AG04449 (cell line): ENCODE measurements at regions of chr11 and their contacts with region 1.

Region 1: GRCh38 chr11:46529095-46529905 is 64.5 kb downstream of the AMBRA1 start:
- DNase-seq: no peak
- H3K4me3 ChIP-seq: no peak overlapping the region
- CTCF ChIP-seq: peak; percentile 84

Region 2: DNA sequence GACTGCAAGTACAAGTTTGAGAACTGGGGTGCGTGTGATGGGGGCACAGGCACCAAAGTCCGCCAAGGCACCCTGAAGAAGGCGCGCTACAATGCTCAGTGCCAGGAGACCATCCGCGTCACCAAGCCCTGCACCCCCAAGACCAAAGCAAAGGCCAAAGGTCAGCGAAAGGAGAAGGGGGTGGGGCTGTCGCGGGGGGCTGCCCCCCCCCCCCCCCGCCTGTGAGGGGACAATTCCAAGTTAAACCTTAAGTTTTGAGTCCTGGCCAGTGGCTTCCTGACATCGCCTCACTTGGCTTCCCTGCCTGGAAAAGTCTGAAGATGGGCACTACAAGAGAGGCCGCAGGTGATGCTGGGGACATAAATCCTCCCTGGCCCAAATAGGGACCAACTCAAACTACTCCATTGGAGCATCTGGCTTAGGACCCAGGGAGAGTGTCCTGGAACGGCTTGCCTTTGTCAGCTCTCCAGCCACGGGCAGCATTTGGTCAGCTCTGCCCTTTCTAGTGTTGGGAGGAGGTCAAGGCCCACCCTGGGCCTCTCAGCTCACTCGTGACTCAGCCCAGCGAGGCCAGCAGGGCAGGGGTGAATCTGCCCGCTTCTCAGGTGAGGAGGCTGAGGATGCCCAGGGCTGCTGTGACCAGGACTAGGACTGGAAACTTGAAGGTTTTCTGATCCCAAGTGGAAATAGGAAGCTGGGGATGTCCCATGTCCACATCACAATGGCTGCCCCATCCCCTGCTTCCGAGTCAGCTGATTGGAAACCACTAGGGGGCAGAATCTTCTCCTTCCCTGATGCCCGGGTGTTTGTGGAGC is 146.5 kb before region 1 on chr11:
- CTCF ChIA-PET with region 1: interaction called, 70 read pairs
- POLR2A ChIA-PET with region 1: no interaction called
- DNase-seq: no peak
- H3K4me3 ChIP-seq: peak overlapping the region; percentile 64
- CTCF ChIP-seq: peak; percentile 65

Region 3: DNA sequence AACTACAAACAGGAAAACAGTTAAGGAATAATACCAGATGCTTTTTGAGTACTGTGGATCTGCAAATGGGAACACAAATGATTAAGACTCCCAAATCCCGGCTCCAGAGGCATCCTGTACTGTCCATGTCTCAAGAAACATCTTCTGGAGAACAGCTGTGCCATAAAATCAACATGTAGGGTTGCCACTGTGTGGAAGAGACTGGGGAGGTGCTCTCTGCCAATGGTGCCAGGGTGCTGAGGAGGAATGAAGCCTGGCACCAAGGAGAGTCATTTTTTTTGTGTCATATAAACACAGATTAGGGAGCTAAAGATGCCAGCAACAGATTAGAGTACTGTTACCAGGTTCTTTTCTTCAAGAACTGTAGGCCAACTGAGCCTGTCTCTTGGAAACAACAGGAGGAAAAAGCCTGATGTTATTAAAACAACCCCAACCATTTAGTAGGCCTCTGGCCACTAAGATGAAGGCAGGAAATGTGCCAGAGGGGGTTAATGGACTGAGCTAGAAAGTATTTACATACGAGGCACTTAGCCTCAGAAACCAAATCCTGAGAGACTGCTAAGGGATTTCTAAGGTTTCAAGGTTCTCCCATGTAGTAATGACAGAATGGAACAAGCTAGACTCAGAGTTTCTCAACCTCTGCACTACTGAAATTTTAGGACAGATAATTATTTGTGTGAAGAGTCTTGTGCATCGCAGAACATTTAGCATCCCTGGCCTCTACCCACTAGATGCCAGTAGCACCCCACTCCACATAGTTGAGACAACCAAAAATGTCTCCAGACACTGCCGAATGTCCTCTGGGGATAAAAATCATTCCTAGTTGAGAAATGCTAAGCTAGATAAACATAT is 83.2 kb before region 1 on chr11:
- CTCF ChIA-PET with region 1: interaction called, 17 read pairs
- POLR2A ChIA-PET with region 1: no interaction called
- DNase-seq: peak; percentile 28
- H3K4me3 ChIP-seq: no peak overlapping the region
- CTCF ChIP-seq: peak; percentile 37

Region 4: DNA sequence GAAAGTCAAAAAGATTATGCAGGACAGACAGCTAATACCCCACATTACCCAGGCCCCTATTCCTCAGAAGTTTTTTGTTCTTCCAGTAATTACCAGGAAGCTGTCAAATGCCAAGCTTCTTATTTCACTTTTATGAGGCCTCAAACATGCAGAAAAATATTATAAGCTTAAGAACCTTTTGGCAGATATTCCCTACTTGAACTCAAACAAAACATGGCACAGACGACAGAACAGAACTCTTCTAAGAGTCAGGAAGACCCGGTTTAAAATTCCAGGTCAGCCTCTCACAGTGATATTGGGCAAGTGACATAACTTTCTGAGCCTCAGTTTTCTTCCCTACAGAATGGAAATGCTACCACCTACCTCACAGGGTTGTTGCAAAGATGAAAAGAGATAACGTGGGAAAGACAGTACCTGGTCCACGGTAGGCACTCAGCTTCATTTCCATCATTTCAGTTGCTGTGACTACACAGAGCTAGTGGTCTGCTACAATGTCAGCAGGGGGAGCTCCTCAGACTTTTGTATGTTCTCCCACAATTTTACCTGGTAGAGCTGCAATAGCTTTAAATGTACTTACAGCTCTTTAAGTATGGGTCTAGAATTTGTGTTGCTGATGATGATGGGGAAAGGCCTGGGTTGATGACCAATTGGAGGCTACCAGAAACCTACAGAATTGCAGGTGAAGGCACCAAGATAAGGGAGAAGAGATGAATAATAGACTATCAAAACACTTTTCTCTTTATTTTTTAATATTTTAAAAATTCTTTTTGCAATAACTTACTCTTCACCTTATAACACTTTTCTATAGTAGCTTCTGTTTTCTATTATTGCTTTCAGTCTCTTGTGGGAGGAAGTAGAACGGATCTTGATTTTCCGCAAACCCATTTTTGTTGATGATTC is 39.4 kb before region 1 on chr11:
- CTCF ChIA-PET with region 1: interaction called, 14 read pairs
- POLR2A ChIA-PET with region 1: no interaction called
- DNase-seq: no peak
- H3K4me3 ChIP-seq: no peak overlapping the region
- CTCF ChIP-seq: peak; percentile 58

Region 5: DNA sequence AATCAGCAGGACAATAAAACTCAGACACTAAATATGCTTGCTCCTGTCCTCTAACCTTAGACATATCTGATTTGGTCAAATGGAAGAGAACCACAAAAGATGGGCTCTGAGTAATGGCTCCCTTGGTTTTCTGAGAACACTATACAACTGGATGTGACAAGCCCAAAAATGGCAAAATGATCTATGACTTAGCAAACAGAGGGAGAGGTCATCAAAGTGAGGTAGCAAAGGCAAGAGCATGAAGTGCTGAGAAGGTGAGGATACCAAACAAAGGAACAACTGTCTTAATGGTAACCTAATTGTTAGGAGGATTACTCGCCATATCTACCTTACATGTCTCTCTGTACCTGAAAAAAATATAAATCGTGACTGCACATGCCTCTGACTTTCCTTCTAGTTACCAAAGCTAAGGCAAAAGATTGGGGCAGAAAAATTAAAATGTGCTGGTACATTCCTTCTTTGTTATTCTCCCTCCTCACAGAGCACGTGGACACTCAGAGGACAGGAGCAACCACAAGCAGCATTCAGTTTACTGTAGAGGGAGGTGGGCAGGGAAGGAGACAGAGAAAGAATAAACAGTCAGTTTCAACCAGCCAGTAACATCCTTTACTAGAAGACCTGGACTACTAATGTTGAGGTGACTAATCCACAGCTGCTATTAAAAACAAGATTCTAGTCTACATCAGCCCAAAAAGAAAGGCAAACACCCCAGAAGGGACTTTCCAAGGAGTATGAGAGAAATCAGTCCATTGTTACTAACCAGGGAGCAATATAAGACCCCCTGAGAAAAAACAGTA is 24.3 kb before region 1 on chr11:
- CTCF ChIA-PET with region 1: interaction called, 10 read pairs
- POLR2A ChIA-PET with region 1: no interaction called
- DNase-seq: peak; percentile 16
- H3K4me3 ChIP-seq: no peak overlapping the region
- CTCF ChIP-seq: no peak

Region 6: DNA sequence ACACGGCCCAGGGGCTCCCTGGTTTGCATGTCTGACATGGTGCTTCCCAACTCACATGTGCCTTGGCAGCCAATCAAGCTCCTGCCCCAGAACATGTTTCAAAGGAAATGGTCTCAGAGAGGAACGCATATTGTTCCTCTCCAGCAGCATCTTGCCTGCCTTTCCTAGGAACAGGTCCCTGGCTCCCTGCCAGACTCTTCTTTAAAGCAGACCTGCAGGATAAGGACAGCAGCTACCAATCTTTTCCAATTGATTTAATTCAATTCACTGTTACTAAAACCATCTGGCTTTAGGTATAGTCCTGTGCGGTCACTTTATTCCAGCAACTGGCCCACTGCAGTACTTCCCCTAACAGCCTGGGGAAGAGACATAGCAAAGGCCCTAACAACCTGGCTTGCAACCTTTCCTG is 15.4 kb before region 1 on chr11:
- CTCF ChIA-PET with region 1: interaction called, 12 read pairs
- POLR2A ChIA-PET with region 1: no interaction called
- DNase-seq: no peak
- H3K4me3 ChIP-seq: no peak overlapping the region
- CTCF ChIP-seq: no peak

Region 7: GRCh38 chr11:46616998-46617675 is 87.8 kb after region 1 on chr11 and contains the starts of genes ATG13 and HARBI1:
- CTCF ChIA-PET with region 1: interaction called, 10 read pairs
- POLR2A ChIA-PET with region 1: no interaction called
- DNase-seq: peak; percentile 23
- H3K4me3 ChIP-seq: peak within 1 kb of the TSS; percentile 100
- CTCF ChIP-seq: no peak

Region 8: DNA sequence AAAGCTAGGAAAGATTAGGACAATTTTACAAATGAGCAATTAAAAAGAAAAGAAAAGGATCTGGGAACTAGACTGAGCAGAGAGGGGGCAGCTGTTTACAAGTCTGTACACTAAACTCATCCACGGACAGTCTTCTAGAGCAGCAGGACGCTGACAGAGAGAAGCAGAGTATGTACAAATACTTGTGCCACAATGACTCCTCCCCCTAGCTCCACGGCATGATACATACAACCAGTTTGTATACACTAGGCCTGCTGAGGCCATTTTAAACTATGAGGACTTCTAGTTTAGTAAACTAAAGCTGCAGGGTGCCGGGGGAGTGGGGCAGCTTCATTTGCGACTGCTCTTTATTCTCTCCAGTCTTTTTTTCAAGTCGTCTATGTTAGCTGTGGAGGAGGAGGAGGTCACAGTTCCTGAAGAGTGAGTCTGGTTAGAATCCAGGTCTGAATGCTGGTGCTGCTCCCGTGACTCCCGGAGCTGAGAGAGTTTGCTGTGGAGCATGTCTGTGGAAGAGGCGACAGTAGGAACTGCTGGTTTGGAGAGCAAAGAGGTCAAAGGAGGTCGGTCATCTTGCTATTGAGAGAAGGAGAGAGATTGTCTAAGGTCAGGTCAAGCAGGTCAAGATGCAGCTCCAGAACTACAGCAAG is 214.5 kb after region 1 on chr11:
- CTCF ChIA-PET with region 1: no interaction called
- POLR2A ChIA-PET with region 1: no interaction called
- DNase-seq: no peak
- H3K4me3 ChIP-seq: no peak overlapping the region
- CTCF ChIP-seq: no peak